ENCODE measurements at regions of chr10 and their contacts with region 1.

Region 1: GRCh38 chr10:14556285-14556956 is 218.3 kb downstream of the FAM107B start:
- DNase-seq: peak; percentile 61
- H3K4me3 Mint-ChIP-seq: peak overlapping the region; percentile 25
- H3K27ac Mint-ChIP-seq: peak overlapping the region; percentile 83
- H3K4me1 Mint-ChIP-seq: peaks cover 95% of the 10 kb centered on the region
- H3K27me3 Mint-ChIP-seq: no peaks in the 10 kb centered on the region

Region 2: GRCh38 chr10:14185316-14186045 is 370.9 kb before region 1 on chr10:
- CTCF ChIA-PET with region 1: no interaction called
- POLR2A ChIA-PET with region 1: no interaction called
- intact Hi-C with region 1: loop called (anchors 10 kb)
- DNase-seq: peak; percentile 77
- H3K4me3 Mint-ChIP-seq: peak overlapping the region; percentile 74
- H3K27ac Mint-ChIP-seq: peak overlapping the region; percentile 98
- H3K4me1 Mint-ChIP-seq: peaks cover 32% of the 10 kb centered on the region
- H3K27me3 Mint-ChIP-seq: peaks cover 31% of the 10 kb centered on the region

Region 3: GRCh38 chr10:14507176-14507575 is 49.2 kb before region 1 on chr10:
- CTCF ChIA-PET with region 1: interaction called, 3 read pairs
- POLR2A ChIA-PET with region 1: no interaction called
- intact Hi-C with region 1: loop called (anchors 2 kb)
- DNase-seq: peak; percentile 72
- H3K4me3 Mint-ChIP-seq: no peak overlapping the region
- H3K27ac Mint-ChIP-seq: peak overlapping the region; percentile 53
- H3K4me1 Mint-ChIP-seq: peaks cover 37% of the 10 kb centered on the region
- H3K27me3 Mint-ChIP-seq: no peaks in the 10 kb centered on the region

Region 4: DNA sequence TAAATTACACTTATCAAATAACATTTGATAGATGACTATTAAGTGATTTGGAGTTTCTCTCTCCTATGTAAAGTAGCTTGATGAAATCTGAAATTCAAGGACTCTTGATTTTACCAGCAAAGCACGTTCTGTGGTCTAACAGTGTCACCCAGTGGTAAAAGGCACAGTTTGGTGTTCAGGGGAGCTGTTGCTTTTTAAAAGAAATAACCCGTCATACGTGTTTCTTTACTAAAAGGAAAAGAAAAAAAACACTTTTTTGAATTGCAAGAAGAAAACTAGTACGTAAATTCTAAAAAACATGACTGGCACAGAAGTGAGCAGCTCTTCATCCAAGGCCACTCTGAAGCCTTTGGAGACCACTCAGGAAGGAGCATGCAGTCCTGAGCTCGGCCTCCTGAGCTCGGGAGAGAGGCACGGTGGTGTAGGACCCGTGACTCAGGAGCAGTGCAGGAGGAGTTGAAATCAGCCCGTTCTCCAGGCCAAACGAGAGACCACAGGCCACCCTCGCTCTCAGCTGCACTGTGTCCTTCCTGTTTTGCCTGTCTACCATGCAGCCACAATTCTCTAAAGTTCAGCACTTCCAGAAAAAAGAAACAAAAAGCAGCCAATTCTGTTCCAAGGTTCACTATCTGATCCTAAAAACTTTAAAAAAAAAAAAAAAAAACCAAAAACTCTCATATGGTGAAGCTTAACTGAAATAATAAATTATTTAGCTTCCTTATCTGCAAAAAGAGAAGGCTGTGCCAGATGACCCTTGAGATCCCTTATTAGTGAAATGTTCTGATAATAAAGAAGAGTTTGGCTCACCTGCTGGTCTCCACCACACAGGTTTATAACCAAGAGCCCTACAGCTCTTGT is 13.1 kb before region 1 on chr10:
- CTCF ChIA-PET with region 1: interaction called, 33 read pairs
- POLR2A ChIA-PET with region 1: interaction called, 7 read pairs
- intact Hi-C with region 1: loop called (anchors 1 kb)
- DNase-seq: peak; percentile 58
- H3K4me3 Mint-ChIP-seq: peak overlapping the region; percentile 52
- H3K27ac Mint-ChIP-seq: peak overlapping the region; percentile 91
- H3K4me1 Mint-ChIP-seq: peaks cover 81% of the 10 kb centered on the region
- H3K27me3 Mint-ChIP-seq: no peaks in the 10 kb centered on the region

Region 5: GRCh38 chr10:14583252-14583651 is 26.8 kb after region 1 on chr10:
- CTCF ChIA-PET with region 1: interaction called, 10 read pairs
- POLR2A ChIA-PET with region 1: interaction called, 3 read pairs
- intact Hi-C with region 1: loop called (anchors 1 kb)
- DNase-seq: peak; percentile 93
- H3K4me3 Mint-ChIP-seq: peak overlapping the region; percentile 56
- H3K27ac Mint-ChIP-seq: peak overlapping the region; percentile 98
- H3K4me1 Mint-ChIP-seq: peaks cover 84% of the 10 kb centered on the region
- H3K27me3 Mint-ChIP-seq: no peaks in the 10 kb centered on the region

Region 6: GRCh38 chr10:14822879-14823755 is 266.7 kb after region 1 on chr10:
- CTCF ChIA-PET with region 1: interaction called, 6 read pairs
- POLR2A ChIA-PET with region 1: no interaction called
- intact Hi-C with region 1: loop called (anchors 1 kb)
- DNase-seq: peak; percentile 56
- H3K4me3 Mint-ChIP-seq: no peak overlapping the region
- H3K27ac Mint-ChIP-seq: no peak overlapping the region
- H3K4me1 Mint-ChIP-seq: peaks cover 2% of the 10 kb centered on the region
- H3K27me3 Mint-ChIP-seq: peaks cover 1% of the 10 kb centered on the region

Region 7: DNA sequence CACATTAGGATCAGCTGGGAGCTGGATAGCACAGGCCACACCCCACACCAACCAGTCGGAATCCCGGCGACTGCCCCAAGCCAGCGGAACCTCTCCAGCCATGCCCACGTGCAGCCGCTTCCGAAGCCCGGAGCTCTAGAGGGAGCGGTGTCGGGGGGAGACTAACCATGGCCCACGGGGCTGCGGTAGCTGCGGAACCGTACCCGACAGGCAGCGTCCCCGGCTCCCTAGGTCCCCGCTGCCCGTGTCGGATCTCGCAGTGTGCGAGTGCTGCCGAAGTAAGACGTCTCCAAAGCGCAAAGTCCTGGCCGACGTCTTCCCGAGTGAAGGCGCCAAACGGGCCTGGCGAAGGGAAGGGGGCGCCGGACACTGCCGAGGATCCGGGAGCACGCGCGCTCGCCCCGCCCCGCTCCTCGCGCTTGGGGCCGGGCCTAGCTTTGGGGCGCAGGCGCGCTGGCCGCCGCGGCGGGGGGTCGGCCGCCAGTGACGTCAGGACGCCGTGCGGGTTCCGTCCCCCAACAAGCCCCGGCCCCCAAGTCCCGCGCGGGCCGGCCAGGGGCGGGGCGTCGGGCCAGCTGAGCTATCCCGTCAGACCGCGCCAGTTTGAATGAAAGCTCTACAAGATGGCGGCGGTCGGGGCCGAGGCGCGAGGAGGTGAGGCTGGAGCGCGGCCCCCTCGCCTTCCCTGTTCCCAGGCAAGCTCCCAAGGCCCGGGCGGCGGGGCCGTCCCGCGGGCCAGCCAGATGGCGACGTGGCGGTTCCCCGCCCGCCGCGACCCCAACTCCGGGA is 322.0 kb after region 1 on chr10 and contains the start of gene SUV39H2:
- CTCF ChIA-PET with region 1: no interaction called
- POLR2A ChIA-PET with region 1: no interaction called
- intact Hi-C with region 1: loop called (anchors 5 kb)
- DNase-seq: peak; percentile 96
- H3K4me3 Mint-ChIP-seq: peak within 1 kb of the TSS; percentile 94
- H3K27ac Mint-ChIP-seq: peak within 1 kb of the TSS; percentile 80
- H3K4me1 Mint-ChIP-seq: peaks cover 41% of the 10 kb centered on the region
- H3K27me3 Mint-ChIP-seq: no peaks in the 10 kb centered on the region
- total RNA-seq, gene SUV39H2: 38.7 to 39.8 TPM

Measured in activated CD4-positive, alpha-beta memory T cell treated with anti-CD3 and anti-CD28 coated beads for 36 hours (primary cell).